ENCODE measurements at regions of chr6 and their contacts with region 1.

Region 1: GRCh38 chr6:81938014-81938856 is 185.8 kb upstream of the TENT5A start:
- DNase-seq: peak; percentile 85

Region 2: DNA sequence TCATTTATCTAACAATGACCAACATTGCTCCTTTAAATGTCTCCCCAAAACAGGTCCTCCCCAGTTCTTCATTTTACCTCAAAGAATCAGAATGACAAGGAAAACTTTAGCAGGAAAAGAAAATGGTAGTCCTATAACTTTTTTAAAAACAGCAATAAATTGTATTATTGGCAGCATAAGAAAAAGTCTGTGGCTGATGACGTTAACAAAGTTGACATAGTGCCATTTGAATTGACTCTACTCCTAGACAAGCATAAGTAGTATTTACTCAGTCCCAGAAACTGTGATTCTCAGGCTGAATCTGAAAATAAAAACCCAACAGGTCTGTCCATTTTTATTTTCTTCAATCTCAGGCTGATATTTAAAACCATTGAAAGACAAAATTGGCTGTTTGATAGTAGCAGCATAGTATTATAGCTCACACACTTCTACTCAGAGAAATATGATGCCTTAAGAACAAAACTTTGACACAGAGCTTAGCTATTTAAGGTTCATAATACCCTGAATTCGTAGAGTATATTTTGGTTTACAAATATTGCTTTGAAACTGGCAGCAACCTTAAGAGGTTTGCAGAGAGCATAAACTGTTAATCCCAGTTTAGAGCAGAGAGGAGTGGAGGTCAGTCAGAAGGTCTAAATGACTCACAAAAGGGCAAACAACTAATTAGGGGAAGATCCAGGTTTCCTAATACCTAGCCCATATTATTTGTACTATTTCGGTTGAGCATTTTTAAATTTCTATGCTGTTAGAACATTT is 150.7 kb before region 1 on chr6:
- in situ Hi-C with region 1: loop called (anchors 10 kb)
- DNase-seq: no peak

Region 3: GRCh38 chr6:82145926-82146452 is 207.8 kb after region 1 on chr6:
- in situ Hi-C with region 1: no loop called
- DNase-seq: no peak